ENCODE measurements at regions of chr14 and their contacts with region 1.

Region 1: DNA sequence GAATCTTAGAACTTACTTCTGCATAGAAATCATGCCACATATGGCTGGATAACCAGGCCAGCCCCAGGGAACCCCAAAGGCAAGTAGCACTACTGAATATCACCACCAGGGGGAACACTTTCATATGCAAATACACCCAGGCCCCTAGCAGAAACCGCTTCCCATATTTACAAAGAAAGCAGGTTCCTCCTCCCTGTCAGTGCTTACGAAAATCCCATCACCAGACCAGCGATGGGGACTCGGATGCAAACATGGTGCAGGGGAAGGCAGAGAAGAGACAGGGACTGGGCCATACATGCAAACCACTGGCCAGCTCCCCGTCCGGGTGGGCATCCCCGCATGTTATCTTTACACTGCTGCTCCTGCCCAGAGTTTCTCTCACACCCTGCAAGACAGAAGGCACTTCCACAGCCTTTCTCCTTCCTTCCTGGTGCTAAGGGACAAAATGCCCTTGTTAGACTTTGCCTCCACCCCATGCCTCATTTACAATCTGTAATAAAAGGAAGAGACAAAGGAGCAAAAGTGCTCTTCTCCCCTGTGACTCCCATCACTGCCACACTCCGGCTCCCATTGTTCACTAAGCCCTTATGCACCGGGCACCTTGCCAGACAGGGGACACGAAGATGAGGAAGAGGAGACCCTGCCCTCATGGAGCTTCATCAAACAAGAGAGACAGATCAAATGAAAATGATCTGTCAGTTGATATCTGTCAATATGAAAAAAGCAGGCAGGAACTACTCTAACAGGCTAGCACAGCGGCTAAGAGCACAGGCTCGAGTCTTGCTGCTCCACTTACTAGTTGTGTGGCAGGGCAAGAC is 62.3 kb downstream of the PTPN21 start:
- DNase-seq: peak; percentile 78
- ATAC-seq: peak; percentile 89
- H3K4me3 Mint-ChIP-seq: no peak overlapping the region
- H3K27ac Mint-ChIP-seq: no peak overlapping the region
- H3K4me1 Mint-ChIP-seq: no peaks in the 10 kb centered on the region
- H3K27me3 Mint-ChIP-seq: no peaks in the 10 kb centered on the region
- CTCF ChIP-seq: peak; percentile 94

Region 2: DNA sequence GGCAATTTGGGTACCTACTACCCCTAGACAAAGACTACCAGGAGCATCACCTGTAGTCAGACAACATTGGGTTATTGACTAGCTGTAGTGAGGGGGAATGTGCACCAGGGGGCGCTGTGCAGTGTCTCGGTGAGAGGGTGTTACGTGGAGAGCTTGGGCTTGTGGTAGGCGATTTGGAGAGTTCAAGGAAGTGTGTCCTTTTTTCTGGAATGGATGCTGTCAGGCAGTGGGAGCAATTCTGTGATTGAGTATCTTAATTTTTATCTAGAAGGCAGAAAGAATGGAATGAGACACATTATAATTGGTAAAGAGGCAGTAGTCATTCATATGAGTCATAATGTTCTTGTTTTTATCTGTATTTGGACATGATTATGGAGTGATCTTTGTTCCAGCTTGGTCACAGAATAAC is 687.2 kb before region 1 on chr14:
- CTCF ChIA-PET with region 1: no interaction called
- POLR2A ChIA-PET with region 1: no interaction called
- intact Hi-C with region 1: no loop called
- DNase-seq: peak; percentile 69
- ATAC-seq: peak; percentile 72
- H3K4me3 Mint-ChIP-seq: no peak overlapping the region
- H3K27ac Mint-ChIP-seq: no peak overlapping the region
- H3K4me1 Mint-ChIP-seq: no peaks in the 10 kb centered on the region
- H3K27me3 Mint-ChIP-seq: no peaks in the 10 kb centered on the region
- CTCF ChIP-seq: peak; percentile 97

Region 3: GRCh38 chr14:88299865-88300530 is 192.5 kb before region 1 on chr14:
- CTCF ChIA-PET with region 1: no interaction called
- POLR2A ChIA-PET with region 1: no interaction called
- intact Hi-C with region 1: no loop called
- DNase-seq: no peak
- ATAC-seq: no peak
- H3K4me3 Mint-ChIP-seq: no peak overlapping the region
- H3K27ac Mint-ChIP-seq: no peak overlapping the region
- H3K4me1 Mint-ChIP-seq: no peaks in the 10 kb centered on the region
- H3K27me3 Mint-ChIP-seq: peaks cover 20% of the 10 kb centered on the region
- CTCF ChIP-seq: no peak

Region 4: DNA sequence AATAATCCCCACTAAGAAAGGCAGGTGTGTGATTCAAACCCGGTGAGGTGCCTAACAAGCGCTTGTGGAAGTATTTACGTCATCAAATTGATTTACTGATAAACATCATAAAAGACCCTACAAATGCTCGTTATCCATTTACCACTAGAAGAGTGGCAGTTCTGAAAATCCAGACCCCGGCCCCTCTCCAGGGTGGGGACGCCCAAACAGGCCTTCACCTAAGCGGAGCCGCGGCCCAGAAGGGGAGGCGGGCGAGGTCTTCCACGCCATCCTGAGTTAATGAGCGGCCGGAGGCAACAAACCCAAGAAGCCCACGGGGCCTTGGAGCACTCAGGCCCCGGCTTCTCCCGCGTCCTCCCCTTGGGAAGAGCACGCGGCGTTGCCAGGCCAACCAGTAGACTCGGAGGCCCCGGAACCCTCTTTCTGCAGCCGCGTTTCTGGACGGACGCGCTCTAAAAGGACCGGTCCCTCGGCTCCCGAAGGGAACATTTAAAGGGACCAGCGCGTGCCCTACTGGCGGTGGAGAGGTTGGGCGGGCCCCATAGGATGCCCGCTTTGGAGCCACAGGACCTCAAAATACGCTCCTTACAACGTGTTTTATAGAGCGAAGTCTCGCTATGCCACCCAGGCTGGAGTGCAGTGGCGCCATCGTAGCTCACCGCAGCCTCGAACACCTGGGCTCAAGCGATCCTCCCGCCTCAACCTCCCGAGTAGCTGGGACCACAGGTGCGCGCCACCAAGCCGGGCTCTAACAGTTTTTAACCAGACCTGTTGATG is 58.8 kb after region 1 on chr14:
- CTCF ChIA-PET with region 1: interaction called, 3 read pairs
- POLR2A ChIA-PET with region 1: no interaction called
- intact Hi-C with region 1: loop called (anchors 5 kb)
- DNase-seq: peak; percentile 54
- ATAC-seq: peak; percentile 54
- H3K4me3 Mint-ChIP-seq: peak overlapping the region; percentile 67
- H3K27ac Mint-ChIP-seq: no peak overlapping the region
- H3K4me1 Mint-ChIP-seq: peaks cover 14% of the 10 kb centered on the region
- H3K27me3 Mint-ChIP-seq: peaks cover 37% of the 10 kb centered on the region
- CTCF ChIP-seq: no peak

Measured in activated CD8-positive, alpha-beta T cell treated with anti-CD3 and anti-CD28 coated beads for 36 hours (primary cell).